Posterior vena cava (tissue), 2 donors: ENCODE measurements at regions of chr19 and their contacts with region 1.

Region 1: DNA sequence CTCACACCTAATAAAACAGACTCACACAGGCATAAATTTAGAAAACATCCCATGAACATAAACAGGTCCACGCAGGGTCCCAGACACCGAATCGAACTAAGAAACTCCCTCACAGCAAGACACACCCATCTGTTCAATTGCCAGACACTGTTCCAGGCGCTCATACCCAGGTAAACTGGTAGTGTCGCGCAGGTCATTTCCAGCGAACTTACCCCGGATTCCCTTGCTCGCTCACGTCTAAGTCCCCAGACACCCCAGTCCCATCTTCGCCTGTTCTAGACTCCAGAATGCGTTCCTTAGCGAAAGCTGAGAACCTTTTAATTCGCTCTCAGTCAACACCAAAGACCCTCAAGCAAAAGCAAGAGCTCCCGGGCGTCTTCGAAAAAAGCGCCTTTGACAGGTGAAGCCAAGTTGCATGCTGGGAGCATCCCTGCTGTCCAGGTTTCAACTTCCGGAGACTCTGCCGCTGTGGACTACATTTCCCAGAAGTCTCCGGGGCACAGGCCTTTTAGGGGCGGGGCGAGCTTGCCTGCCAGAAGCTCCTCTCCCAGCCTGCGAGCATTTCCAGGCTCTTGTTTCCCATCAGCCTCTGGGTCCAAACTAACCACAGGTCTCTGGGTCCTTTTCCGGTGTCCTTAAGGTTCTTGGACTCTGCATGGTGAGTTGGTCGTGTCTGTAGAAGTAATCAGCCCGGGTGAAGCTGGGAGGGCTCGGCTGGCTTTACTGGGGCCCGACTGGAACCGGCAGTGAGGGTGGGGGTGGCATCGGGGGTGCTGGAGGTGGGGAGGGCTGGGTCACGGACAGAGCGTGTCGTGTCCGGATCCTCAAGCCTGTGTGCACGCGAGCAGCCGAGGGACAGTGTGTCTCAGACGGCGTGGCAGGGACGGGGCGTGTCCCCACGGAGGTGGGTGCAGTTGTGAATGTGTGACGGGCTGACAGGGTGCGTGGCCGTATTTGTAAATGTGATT is at the start of gene ZNF283:
- DNase-seq: peak; percentile 94
- total RNA-seq, gene ZNF283: 9.7 to 9.8 TPM

Region 2: GRCh38 chr19:43901395-43902390 is 74.6 kb after region 1 on chr19:
- intact Hi-C with region 1: loop called in 1 of 2 experiments (anchors 2 kb)
- DNase-seq: peak; percentile 92

Region 3: DNA sequence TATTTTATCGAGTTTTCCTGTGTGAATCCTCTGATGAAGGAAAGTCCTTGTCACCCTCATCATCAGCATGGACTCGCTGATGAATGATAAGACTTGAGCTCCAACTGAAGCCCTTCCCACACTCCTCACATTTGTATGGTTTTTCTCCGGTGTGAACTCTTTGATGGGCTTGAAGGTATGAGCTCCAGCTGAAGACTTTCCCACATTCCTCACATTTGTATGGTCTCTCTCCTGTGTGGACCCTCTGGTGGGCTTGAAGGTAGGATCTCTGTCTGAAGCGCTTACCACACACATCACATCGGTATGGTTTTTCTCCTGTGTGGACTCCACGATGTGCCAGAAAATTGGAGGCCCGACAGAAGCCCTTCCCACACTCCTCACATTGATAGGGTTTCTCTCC is 86.3 kb after region 1 on chr19:
- intact Hi-C with region 1: no loop called
- DNase-seq: no peak

Region 4: DNA sequence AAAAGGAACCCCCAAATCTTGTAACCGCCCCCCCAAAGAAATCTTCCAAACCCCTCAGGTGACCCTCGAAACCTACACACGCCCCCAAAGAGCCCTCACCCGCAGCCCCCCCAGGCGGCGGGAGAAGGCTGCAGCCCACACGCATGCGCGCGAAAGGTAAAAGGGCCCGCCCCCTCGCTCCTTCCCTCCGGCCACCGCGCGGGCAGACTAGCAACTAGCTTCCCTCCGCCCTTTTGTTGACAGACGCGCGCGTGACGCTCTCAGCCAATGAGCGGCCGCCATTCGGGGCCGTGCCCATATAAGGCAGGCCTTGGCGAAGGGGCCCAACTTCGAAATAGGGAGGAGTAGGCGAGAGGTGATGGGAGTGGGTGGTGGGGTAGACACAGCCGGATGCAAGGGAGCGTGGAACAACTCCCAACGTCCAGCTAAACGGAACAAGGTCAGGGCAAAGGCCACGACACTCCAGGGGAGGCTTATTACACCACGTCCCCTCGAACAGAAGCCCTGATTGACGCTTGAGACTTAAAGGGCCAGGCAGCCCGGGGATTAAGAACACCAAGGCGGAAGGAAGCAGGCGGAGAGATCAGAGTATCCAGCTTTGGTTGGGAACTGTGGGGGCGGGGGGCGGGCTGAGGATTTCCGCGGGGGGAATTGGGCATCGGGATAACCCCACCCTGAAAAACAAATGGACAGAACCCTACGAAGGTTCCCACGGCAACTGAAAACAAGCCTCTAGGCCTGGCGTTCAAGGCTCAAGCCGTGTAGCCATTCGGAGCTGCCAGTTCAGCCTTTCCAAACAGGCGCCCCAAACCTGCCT is 1890.3 kb after region 1 on chr19:
- intact Hi-C with region 1: no loop called
- DNase-seq: peak; percentile 100